GM23248 (cell line): ENCODE measurements at regions of chr12 and their contacts with region 1.

Region 1: DNA sequence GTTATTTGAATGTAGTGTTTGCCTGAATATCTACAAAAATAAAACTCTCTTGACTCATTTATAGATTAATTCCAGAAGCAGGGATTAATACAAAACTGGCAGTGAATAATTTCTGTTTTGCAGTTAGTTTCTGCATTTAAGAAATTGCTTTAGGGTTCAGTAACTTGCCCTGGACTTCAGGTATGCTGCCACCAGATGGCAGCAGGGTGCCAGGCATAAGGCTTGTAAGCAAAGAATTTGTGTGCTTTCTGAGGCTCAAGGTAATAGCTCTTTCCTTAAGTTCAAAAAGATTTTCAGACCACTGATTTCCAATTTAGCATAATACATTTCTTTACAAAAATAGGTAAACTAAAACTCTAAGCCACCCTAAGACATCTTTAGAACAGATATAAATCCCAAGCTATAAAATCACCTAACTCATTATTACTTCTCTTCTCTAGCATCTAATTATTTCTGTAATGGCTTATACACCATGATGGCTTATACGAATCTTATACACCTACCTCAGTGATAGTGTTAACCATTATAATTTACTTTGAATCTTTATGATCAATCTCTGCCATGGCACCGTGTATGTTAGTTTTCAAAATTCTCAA is 398.3 kb downstream of the APAF1 start:
- DNase-seq: peak; percentile 69
- H3K4me3 ChIP-seq: no peak overlapping the region
- H3K27ac ChIP-seq: no peak overlapping the region
- H3K4me1 ChIP-seq: no peaks in the 10 kb centered on the region
- H3K27me3 ChIP-seq: no peaks in the 10 kb centered on the region; the same call in 1 of the 2 replicates

Region 2: DNA sequence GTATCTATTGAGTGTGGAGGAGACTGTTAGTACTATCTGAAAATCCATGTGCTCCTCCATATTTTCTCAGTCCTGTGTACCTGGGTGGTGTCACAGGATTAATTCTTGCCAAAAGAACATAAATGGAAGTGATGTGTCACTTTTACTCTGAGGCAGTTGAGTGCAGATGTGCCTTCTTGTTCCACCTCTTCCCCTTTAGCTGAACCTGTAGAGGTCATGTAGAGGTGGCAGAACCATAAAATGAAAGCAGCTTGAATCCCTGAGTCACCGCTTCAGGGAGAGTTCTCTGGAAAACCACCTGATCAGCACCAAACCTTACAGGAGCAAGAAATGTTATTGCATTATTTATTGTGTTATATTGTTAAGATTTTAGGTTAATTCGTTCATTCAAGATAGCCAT is 464.6 kb before region 1 on chr12:
- in situ Hi-C with region 1: no loop called
- DNase-seq: peak; percentile 21
- H3K4me3 ChIP-seq: no peak overlapping the region
- H3K27ac ChIP-seq: no peak overlapping the region
- H3K4me1 ChIP-seq: no peaks in the 10 kb centered on the region
- H3K27me3 ChIP-seq: no peaks in the 10 kb centered on the region

Region 3: GRCh38 chr12:99767809-99768208 is 724.4 kb after region 1 on chr12:
- in situ Hi-C with region 1: loop called (anchors 10 kb)
- DNase-seq: peak; percentile 56
- H3K4me3 ChIP-seq: peak overlapping the region; percentile 35; the same call in 1 of the 2 replicates
- H3K27ac ChIP-seq: no peak overlapping the region
- H3K4me1 ChIP-seq: no peaks in the 10 kb centered on the region
- H3K27me3 ChIP-seq: no peaks in the 10 kb centered on the region